ENCODE measurements at regions of chr1 and their contacts with region 1.

Region 1: GRCh38 chr1:28056129-28056925 is 32.1 kb downstream of the EYA3 start:
- DNase-seq: peak; percentile 51
- H3K4me3 Mint-ChIP-seq: peak overlapping the region; percentile 21
- H3K27ac Mint-ChIP-seq: peak overlapping the region; percentile 86
- H3K4me1 Mint-ChIP-seq: peaks cover 34% of the 10 kb centered on the region
- H3K27me3 Mint-ChIP-seq: no peaks in the 10 kb centered on the region

Region 2: DNA sequence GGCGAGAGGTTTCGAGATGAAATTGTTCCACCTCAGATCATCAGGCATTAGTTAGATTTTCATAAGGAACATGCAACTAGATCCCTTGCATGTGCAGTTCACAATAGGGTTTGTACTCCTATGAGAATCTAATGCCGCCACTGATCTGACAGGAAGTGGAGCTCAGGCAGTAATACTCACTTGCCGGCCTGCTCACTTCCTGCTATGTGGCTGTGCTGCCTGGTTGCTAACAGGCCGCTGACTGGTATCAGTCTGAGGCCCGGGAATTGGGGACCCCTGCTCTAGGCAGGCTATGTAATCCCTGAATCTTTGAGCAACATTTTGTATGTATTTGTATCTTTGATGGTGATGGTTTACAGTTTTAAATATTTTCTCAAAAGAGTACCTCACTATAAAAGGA is 64.1 kb before region 1 on chr1:
- intact Hi-C with region 1: loop called (anchors 5 kb)
- DNase-seq: peak; percentile 36
- H3K4me3 Mint-ChIP-seq: peak overlapping the region; percentile 37
- H3K27ac Mint-ChIP-seq: peak overlapping the region; percentile 67
- H3K4me1 Mint-ChIP-seq: peaks cover 50% of the 10 kb centered on the region
- H3K27me3 Mint-ChIP-seq: no peaks in the 10 kb centered on the region